Psoas muscle (tissue), 8 donors: ENCODE measurements at regions of chr17 and their contacts with region 1.

Region 1: DNA sequence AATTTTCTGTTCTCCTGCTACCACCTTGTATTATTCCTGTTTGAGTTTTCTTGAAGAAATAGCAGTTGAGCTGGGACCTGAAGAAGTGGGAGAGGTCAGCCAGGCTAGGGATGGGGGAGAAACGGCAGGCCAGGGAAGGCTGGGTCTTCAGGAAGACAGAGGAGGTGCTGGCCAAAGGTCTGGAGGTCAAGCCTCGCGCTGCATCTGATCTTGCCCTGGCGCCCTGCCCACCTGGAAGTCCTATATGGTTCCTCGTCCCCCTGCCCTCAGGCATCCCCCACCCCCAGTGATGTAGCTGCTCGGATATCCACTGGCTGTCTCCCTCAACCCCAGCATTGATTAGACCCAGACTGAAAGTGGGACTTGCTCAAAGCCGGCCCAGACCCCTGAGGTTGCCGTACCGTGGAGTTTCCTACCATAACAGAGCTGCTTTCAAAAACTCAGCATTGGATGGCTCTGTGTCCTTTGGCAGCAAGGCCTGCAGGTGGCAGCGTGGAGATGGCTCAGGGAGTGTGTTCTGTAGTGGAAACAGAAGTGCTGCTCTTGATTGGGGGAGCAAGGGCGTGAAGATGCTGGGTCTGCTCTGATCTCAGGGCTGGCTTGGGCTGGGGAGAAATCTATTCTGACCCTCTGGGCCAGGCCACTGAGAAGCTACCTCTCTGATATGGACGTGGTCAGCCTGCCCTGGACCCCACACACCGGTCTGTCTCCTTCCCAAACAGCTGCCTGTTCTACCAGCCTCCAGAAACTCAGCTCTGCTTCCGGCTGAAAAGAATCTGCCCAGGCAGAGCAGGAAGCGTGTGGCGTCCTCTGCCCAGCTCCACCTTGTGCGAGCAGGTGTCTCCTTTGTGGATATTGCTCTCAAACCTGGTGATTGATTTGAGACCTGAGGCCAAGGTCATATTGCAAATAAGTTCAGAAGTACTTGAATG is 107.0 kb upstream of the CACNG5 start:
- DNase-seq: peak; percentile 45 to 72
- ATAC-seq: peak; percentile 67 to 83 (median 70)
- H3K4me3 ChIP-seq: no peak overlapping the region
- H3K27ac ChIP-seq: no peak overlapping the region
- H3K4me1 ChIP-seq: no peaks in the 10 kb centered on the region
- H3K27me3 ChIP-seq: no peaks in the 10 kb centered on the region
- CTCF ChIP-seq: peak; percentile 50

Region 2: GRCh38 chr17:66466840-66467367 is 261.0 kb before region 1 on chr17:
- intact Hi-C with region 1: no loop called
- DNase-seq: peak in 1 of 2 donors; percentile 34
- ATAC-seq: peak; percentile 37 to 63 (median 50)
- H3K4me3 ChIP-seq: no peak overlapping the region
- H3K27ac ChIP-seq: no peak overlapping the region
- H3K4me1 ChIP-seq: peaks cover 13% of the 10 kb centered on the region
- H3K27me3 ChIP-seq: no peaks in the 10 kb centered on the region
- CTCF ChIP-seq: no peak

Region 3: DNA sequence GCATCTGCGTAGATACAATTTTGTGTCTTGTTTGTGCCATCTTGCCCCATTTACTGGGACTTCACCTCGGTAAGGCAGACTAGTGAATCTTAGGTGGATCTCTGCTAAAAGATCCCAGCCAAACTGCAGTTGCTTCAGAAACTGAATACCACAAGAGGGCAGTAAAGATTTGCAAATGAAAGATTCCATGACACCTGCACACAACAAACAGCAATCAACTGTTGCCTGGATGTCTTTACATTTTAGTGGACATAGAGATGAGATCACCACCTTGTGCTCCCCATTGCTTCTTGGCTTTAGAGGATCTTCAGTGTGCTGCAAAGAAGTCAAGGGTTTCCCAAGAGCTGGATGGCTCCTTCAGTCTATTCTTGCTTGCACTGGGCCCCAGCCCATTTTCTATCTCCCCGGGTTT is 12.2 kb before region 1 on chr17:
- intact Hi-C with region 1: loop called in 1 of 2 experiments (anchors 1 kb)
- DNase-seq: no peak
- ATAC-seq: peak; percentile 65 to 88 (median 72)
- H3K4me3 ChIP-seq: no peak overlapping the region
- H3K27ac ChIP-seq: no peak overlapping the region
- H3K4me1 ChIP-seq: peaks cover 9% of the 10 kb centered on the region
- H3K27me3 ChIP-seq: no peaks in the 10 kb centered on the region
- CTCF ChIP-seq: peak; percentile 71

Region 4: DNA sequence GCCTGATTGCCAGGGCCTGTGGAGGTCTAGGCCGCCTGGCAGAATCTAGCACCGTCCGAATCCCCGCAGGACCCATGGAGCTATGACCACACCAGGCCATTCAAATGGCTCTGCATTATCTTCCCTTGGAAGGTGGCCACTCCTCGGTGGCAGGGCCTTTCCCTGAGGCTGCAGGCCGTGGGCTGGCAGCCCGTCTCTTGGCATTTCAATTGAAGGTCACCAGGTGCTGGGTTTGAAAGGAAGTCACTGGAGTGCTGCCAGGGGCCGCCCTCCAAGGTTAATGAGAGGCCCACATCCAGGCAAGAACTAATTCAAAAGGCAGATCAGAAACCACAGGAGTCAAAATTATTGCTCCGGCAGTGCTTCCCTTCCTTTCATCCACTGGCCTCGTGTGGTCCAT is 79.3 kb after region 1 on chr17:
- intact Hi-C with region 1: no loop called
- DNase-seq: no peak
- ATAC-seq: no peak
- H3K4me3 ChIP-seq: no peak overlapping the region
- H3K27ac ChIP-seq: no peak overlapping the region
- H3K4me1 ChIP-seq: no peaks in the 10 kb centered on the region
- H3K27me3 ChIP-seq: no peaks in the 10 kb centered on the region
- CTCF ChIP-seq: no peak

Region 5: DNA sequence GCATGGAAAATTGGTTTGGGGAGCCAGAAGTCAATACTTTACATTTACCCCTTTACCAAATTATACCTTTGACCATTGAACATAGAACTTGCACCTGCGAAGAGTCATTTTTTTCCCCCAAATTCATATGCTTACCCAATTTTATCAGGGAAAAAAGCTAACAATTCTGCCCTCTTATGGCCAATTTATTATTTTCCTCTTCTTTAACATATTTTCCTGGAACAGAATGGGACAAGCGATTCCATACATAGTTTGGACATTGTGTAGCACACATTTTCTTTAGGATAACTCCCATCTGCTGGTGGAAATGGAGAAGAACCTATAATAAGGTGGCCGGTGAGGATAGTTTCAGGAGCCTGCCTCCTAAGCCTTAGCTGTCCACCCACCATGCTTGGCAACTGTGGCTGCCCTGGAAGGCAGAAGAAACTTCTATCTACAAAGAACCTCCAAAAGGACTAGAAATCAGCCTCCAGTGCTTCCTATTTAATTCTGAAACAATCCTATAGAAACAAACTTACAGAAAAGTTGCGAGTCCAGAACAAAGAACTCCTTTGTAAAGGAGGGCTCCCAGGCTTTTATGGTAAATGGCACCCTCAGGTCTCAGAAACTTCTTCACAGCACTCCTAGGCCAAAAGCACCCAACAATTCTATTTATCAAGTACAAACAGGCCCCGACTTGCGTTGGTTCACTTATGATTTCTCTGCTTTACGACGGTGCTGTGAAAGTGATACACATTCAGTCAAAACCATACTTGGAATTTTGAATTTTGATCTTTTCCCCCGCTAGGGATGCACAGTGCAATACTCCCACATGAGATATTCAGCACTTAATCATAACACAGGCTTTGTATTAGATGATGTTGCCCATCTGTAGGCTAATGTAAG is 172.5 kb after region 1 on chr17:
- intact Hi-C with region 1: loop called in 1 of 2 experiments (anchors 5 kb)
- DNase-seq: no peak
- ATAC-seq: no peak
- H3K4me3 ChIP-seq: no peak overlapping the region
- H3K27ac ChIP-seq: no peak overlapping the region
- H3K4me1 ChIP-seq: no peaks in the 10 kb centered on the region
- H3K27me3 ChIP-seq: no peaks in the 10 kb centered on the region
- CTCF ChIP-seq: no peak

Region 6: GRCh38 chr17:66906321-66907278 is 178.7 kb after region 1 on chr17:
- intact Hi-C with region 1: loop called (anchors 1 to 5 kb)
- DNase-seq: peak; percentile 74 to 86
- ATAC-seq: peak; percentile 70 to 86 (median 74)
- H3K4me3 ChIP-seq: no peak overlapping the region
- H3K27ac ChIP-seq: no peak overlapping the region
- H3K4me1 ChIP-seq: no peaks in the 10 kb centered on the region
- H3K27me3 ChIP-seq: no peaks in the 10 kb centered on the region
- CTCF ChIP-seq: peak; percentile 92

Region 7: GRCh38 chr17:67157732-67158639 is 430.1 kb after region 1 on chr17:
- intact Hi-C with region 1: loop called (anchors 5 to 10 kb)
- DNase-seq: no peak
- ATAC-seq: peak; percentile 61 to 90 (median 75)
- H3K4me3 ChIP-seq: no peak overlapping the region
- H3K27ac ChIP-seq: no peak overlapping the region
- H3K4me1 ChIP-seq: peaks cover 12% of the 10 kb centered on the region
- H3K27me3 ChIP-seq: no peaks in the 10 kb centered on the region
- CTCF ChIP-seq: peak; percentile 45

Region 8: GRCh38 chr17:67165201-67165600 is 437.3 kb after region 1 on chr17:
- intact Hi-C with region 1: loop called in 1 of 2 experiments (anchors 10 kb)
- DNase-seq: peak in 1 of 2 donors; percentile 19
- ATAC-seq: peak; percentile 32 to 65 (median 64)
- H3K4me3 ChIP-seq: no peak overlapping the region
- H3K27ac ChIP-seq: no peak overlapping the region
- H3K4me1 ChIP-seq: peaks cover 12% of the 10 kb centered on the region
- H3K27me3 ChIP-seq: no peaks in the 10 kb centered on the region
- CTCF ChIP-seq: no peak